ENCODE measurements at regions of chr9 and their contacts with region 1.

Region 1: DNA sequence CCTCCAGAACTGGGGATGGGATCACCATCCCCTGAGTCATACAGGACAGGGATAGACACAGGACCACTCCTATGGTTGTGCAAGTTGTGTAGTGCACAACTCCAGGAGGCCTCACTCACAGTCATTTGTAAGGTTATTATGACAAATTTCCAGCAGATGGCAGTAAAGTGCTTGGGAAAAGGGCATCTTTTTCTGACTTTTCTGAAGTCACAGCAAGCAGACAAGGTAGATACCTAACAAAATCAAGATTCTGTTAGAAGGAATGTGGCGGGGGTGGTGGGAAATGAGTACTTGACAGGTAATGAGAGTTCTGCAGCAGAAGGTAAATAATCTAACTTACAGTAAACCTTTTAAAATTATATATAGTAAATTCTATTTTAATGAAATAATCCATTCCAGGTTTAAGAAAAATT is 16.7 kb upstream of the KIF27 start:
- DNase-seq: no peak
- ATAC-seq: peak; percentile 58

Region 2: DNA sequence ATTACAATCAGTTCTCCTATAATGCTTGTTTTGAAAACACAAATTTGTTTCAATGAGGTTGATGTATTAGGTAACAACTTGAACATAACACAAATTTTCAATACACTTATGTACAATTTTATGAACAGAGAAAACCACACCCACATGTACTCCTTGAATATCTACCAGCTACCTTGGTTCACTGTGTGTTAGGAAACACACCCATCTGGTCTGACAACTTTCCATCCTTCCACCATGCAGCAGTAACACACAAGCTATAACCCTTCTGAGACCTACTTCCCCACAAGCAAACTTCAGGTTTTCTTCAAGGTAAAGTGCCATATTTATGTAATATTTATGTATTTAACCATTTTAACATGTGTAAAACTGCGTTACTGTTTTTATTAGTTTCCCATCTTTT is 193.7 kb before region 1 on chr9:
- intact Hi-C with region 1: no loop called
- DNase-seq: no peak
- ATAC-seq: no peak

Region 3: GRCh38 chr9:84261082-84261746 is 323.3 kb after region 1 on chr9:
- intact Hi-C with region 1: loop called (anchors 1 kb)
- DNase-seq: peak; percentile 90
- ATAC-seq: peak; percentile 99

Region 4: GRCh38 chr9:84315278-84315877 is 377.5 kb after region 1 on chr9:
- intact Hi-C with region 1: loop called (anchors 5 kb)
- DNase-seq: peak; percentile 59
- ATAC-seq: peak; percentile 47